Lower leg skin (tissue), 4 donors: ENCODE measurements at regions of chr9 and their contacts with region 1.

Region 1: GRCh38 chr9:25129537-25129936 is 548.7 kb downstream of the TUSC1 start:
- DNase-seq: no peak
- H3K4me3 ChIP-seq: no peak overlapping the region
- CTCF ChIP-seq: no peak
- POLR2A ChIP-seq: no peak

Region 2: DNA sequence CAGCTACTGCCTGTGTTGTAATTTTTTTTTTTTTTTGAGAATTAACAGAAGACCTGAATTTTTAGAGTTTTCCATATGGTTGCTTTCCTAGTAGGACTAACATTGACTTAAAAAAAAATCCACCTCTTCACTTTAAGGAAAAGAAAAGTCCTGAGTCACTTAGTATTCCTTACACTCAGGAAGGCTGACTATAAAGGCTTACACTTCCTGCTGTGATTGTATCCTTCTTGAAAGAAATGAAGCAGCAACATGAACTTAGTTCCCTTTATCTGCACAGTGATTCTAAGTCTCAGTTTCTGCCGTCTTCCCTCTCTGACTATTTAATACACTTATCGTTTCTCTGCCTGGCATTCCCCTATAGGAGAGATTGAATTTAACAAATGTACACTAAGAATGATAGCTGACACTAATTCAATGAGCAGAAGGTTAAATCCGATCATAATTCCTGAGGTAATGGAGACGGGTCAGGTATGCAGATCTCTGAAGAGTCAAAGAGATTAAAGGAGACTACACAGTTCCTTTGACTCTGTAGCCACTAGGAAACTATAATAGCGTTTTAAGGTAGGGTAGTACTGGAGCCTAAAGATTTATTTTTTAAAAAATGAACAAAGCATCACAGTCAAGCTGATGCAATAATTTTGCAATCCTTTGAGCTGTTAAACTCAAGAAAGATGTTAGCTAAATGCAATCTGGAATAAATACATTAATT is 1118.4 kb before region 1 on chr9:
- intact Hi-C with region 1: loop called (anchors 5 kb)
- DNase-seq: no peak
- H3K4me3 ChIP-seq: no peak overlapping the region
- CTCF ChIP-seq: no peak
- POLR2A ChIP-seq: no peak

Region 3: GRCh38 chr9:26639761-26640160 is 1510.2 kb after region 1 on chr9:
- intact Hi-C with region 1: no loop called
- DNase-seq: no peak
- H3K4me3 ChIP-seq: no peak overlapping the region
- CTCF ChIP-seq: no peak
- POLR2A ChIP-seq: no peak